ENCODE measurements at regions of chr7 and their contacts with region 1.

Region 1: DNA sequence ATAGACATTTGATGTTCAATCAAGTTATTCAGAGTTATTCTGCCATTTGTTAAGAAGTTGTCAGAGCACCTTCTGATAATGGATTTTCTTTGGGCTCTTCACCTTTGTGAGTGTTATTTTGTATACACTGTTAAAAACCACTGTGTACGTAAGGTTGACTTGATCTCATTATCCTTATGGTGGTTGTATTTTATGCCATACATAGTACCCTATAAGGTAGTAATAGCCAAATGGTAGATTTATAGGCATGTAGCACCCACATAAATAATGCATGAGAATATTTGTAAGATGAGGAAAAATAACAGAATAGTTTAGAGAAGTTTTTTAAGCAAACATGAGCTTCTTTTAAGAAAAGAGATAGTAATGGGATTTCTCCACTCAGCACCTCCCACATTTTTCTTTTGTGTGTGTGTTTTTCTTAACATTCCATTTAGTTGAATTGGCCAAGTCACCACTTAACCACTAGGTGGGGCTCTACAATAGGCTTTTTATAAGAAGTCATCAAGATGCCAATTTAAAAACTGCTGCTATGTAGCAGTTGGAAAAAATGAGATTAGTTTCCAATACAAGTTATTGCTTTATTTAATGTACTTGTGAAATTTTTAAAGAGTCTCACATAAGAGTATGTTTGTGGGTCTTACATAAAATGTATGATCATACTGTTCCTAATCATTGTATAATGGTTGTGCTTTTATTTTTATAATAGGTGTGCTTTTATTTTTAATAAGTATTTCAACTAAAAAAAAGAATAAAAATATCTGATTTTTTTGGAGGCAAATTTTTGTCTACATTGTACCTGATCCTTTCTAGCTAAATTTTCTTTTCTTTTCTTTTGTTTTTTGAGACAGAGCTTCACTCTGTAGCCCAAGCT is 41.1 kb upstream of the STMP1 start:
- DNase-seq: peak in 3 of 9 experiments; percentile 17 to 61 (median 52)
- ATAC-seq: peak; percentile 42
- H3K4me3 ChIP-seq: no peak overlapping the region
- H3K4me3 Mint-ChIP-seq: no peak overlapping the region
- H3K27ac ChIP-seq: no peak overlapping the region
- H3K27ac Mint-ChIP-seq: no peak overlapping the region
- H3K4me1 ChIP-seq: no peaks in the 10 kb centered on the region
- H3K4me1 Mint-ChIP-seq: no peaks in the 10 kb centered on the region
- H3K27me3 ChIP-seq: no peaks in the 10 kb centered on the region
- H3K27me3 Mint-ChIP-seq: no peaks in the 10 kb centered on the region
- CTCF ChIP-seq: peak; percentile 95

Region 2: DNA sequence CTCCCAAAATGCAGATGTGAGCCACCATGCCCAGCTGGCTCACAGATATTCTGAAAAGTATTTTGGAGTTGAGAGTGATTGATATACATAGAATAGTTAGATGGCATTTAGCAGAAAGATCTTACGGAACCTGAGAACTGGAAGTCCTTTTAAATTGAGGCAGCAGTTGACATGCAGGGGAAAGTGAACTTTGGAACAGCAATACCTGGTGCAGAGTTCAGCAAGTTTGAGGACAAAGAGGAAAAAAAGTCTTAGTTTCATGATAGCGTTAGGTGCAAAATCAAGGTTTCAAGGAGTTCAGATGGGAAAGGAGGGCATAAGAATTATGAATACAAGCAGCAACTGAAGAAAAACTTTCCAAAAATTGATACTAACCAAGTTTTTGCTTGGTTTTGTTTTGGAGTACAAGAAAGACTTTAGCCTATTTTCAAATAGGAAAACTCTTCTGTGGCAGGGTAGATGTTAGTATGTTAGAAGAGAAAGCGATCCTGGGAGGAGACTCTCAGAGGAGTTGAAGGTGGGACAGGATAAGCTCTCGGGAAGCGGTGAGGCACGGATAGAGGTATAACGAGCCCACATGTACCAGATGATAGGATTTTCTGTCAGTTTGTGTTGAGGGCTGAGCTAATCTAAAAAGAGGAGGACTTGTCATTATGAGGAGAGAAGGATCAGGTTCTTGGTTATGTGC is 13.1 kb after region 1 on chr7:
- CTCF ChIA-PET with region 1: interaction called, 24 read pairs
- POLR2A ChIA-PET with region 1: no interaction called
- intact Hi-C with region 1: no loop called
- DNase-seq: no peak
- ATAC-seq: no peak
- H3K4me3 ChIP-seq: no peak overlapping the region
- H3K4me3 Mint-ChIP-seq: no peak overlapping the region
- H3K27ac ChIP-seq: no peak overlapping the region
- H3K27ac Mint-ChIP-seq: no peak overlapping the region
- H3K4me1 ChIP-seq: no peaks in the 10 kb centered on the region
- H3K4me1 Mint-ChIP-seq: no peaks in the 10 kb centered on the region
- H3K27me3 ChIP-seq: no peaks in the 10 kb centered on the region
- H3K27me3 Mint-ChIP-seq: no peaks in the 10 kb centered on the region
- CTCF ChIP-seq: no peak

Measured in CD8-positive, alpha-beta T cell (primary cell).